Naive thymus-derived CD4-positive, alpha-beta T cell (primary cell): ENCODE measurements at regions of chr1 and their contacts with region 1.

Region 1: GRCh38 chr1:109213785-109214468 is at the start of gene SARS1:
- DNase-seq: peak; percentile 77 to 96 (median 91)
- ATAC-seq: peak; percentile 91
- H3K4me3 ChIP-seq: peak within 1 kb of the TSS; percentile 97
- H3K4me3 Mint-ChIP-seq: peak within 1 kb of the TSS; percentile 94 to 100 (median 98)
- H3K27ac ChIP-seq: peak within 1 kb of the TSS; percentile 85
- H3K27ac Mint-ChIP-seq: peak within 1 kb of the TSS; percentile 85 to 98 (median 97)
- H3K4me1 ChIP-seq: peaks cover 22 to 27% of the 10 kb centered on the region in 2 donors
- H3K4me1 Mint-ChIP-seq: peaks cover 33 to 47% (median 42%) of the 10 kb centered on the region in 7 donors
- H3K27me3 ChIP-seq: no peaks in the 10 kb centered on the region
- H3K27me3 Mint-ChIP-seq: peaks cover 0 to 4% (median 0%) of the 10 kb centered on the region in 5 donors
- total RNA-seq, gene SARS1: 110 to 173 (median 135) TPM

Region 2: GRCh38 chr1:108746372-108747205 is 467.3 kb before region 1 on chr1 and contains the start of gene STXBP3:
- CTCF ChIA-PET with region 1: no interaction called
- POLR2A ChIA-PET with region 1: no interaction called
- intact Hi-C with region 1: loop called in 1 of 2 experiments (anchors 1 kb)
- DNase-seq: peak; percentile 98 to 100 (median 99)
- ATAC-seq: peak; percentile 97
- H3K4me3 ChIP-seq: peak within 1 kb of the TSS; percentile 76
- H3K4me3 Mint-ChIP-seq: peak within 1 kb of the TSS; percentile 90 to 100 (median 97)
- H3K27ac ChIP-seq: peak within 1 kb of the TSS; percentile 98
- H3K27ac Mint-ChIP-seq: peak within 1 kb of the TSS; percentile 93 to 100 (median 98)
- H3K4me1 ChIP-seq: peaks cover 3 to 6% of the 10 kb centered on the region in 2 donors
- H3K4me1 Mint-ChIP-seq: peaks cover 26 to 47% (median 41%) of the 10 kb centered on the region in 7 donors
- H3K27me3 ChIP-seq: no peaks in the 10 kb centered on the region
- H3K27me3 Mint-ChIP-seq: peaks cover 0 to 5% (median 0%) of the 10 kb centered on the region in 5 donors
- total RNA-seq, gene STXBP3: 46.8 to 75.2 (median 54.0) TPM

Region 3: DNA sequence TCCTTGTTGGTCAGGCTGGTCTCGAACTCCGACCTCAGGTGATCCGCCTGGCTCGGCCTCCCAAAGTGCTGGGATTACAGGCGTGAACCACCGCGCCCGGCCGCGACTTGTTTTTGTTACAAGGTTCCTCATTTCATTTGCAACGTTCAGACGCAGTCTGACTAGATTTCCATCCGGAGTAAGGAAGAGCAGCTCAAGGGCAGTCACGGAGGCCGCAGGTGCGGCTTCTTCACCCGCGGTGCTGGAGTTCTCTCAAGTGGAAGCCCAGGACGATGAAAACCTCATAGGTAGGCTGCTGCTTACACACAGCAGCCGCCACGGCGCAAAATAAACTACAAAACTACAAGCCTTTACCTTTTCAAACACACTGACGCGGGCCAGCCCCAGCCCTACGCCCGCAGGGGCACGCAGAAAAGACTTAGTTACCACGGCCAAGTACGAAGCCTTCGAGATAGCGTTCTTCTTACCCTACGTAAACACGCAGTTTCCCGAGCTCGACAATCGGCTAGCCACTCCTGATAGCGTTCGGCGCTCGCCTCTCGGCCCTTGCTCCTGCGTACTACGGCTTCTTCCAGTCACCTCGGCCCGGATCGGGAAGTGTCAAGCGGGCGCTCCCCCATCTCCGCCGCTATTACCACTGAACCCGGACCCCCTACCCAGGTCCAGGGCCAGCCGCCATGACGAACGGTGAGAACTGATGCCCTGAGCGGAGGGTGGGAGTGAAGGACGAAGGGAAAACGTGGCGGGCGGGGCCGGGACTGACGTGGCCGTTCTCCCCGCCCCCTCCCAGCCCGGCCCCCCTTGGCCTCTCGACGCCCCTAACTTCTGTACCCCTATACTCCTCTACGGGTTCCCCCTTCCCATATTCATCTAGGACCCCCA is 123.5 kb before region 1 on chr1 and contains the start of gene TMEM167B:
- CTCF ChIA-PET with region 1: no interaction called
- POLR2A ChIA-PET with region 1: interaction called, 3 read pairs
- intact Hi-C with region 1: loop called in 1 of 2 experiments (anchors 5 kb)
- DNase-seq: peak; percentile 71 to 92 (median 87)
- ATAC-seq: peak; percentile 98
- H3K4me3 ChIP-seq: peak within 1 kb of the TSS; percentile 84
- H3K4me3 Mint-ChIP-seq: peak within 1 kb of the TSS; percentile 88 to 98 (median 96)
- H3K27ac ChIP-seq: peak within 1 kb of the TSS; percentile 97
- H3K27ac Mint-ChIP-seq: peak within 1 kb of the TSS; percentile 90 to 99 (median 98)
- H3K4me1 ChIP-seq: peaks cover 14 to 18% of the 10 kb centered on the region in 2 donors
- H3K4me1 Mint-ChIP-seq: peaks cover 15 to 43% (median 36%) of the 10 kb centered on the region in 7 donors
- H3K27me3 ChIP-seq: no peaks in the 10 kb centered on the region
- H3K27me3 Mint-ChIP-seq: no peaks in the 10 kb centered on the region
- total RNA-seq, gene TMEM167B: 33.2 to 65.6 (median 41.2) TPM

Region 4: GRCh38 chr1:109193653-109194590 is 20.0 kb before region 1 on chr1:
- CTCF ChIA-PET with region 1: interaction called, 5 read pairs
- POLR2A ChIA-PET with region 1: interaction called, 14 read pairs
- intact Hi-C with region 1: no loop called
- DNase-seq: peak in 7 of 9 donors; percentile 25 to 68 (median 42)
- ATAC-seq: peak; percentile 81
- H3K4me3 ChIP-seq: no peak overlapping the region
- H3K4me3 Mint-ChIP-seq: no peak overlapping the region
- H3K27ac ChIP-seq: no peak overlapping the region
- H3K27ac Mint-ChIP-seq: peak overlapping the region in 1 of 9 donors; percentile 76
- H3K4me1 ChIP-seq: peaks cover 0 to 1% of the 10 kb centered on the region in 2 donors
- H3K4me1 Mint-ChIP-seq: peaks cover 2 to 18% (median 5%) of the 10 kb centered on the region in 7 donors
- H3K27me3 ChIP-seq: no peaks in the 10 kb centered on the region
- H3K27me3 Mint-ChIP-seq: no peaks in the 10 kb centered on the region

Region 5: DNA sequence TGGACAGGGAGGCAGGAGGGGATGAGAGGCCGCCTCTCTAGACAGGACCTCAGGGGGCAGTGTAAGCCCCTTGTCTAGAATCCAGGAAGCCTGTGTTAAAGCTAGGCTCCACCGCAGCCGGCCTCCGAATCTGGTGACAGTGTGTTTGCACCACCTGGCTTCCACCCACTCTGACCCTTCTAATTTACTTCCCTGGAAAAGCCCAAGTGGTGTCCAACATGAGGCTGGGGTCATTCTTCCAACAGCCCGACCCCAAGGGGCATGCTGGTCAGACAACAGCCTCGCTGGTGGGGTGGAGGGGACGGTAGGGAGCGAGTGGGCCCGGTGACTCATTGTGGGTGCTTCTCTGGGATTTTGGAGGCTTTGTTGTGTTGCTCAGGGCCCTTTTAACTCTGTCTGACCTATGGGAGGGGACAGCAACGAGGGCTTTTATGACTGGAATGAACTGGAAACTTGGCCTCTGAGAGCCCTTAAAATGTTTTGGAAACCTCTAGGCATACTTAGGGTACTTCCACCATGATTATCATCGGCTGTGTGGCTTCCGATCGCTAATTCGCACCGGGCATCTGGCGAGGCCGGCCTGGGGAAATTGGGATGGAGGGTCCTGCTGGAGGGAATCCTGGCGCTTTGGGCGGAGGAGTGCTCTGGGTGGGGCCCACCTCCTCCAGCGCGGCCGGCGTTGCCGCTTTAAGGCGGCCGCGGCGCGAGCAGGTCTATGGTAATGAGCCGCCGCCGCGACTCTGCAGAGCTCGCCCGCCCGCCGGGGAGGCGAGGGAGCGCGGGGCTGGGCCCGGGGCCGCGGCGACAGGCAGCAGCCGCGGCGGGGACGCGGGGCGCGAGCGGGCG is 35.1 kb after region 1 on chr1 and contains the start of gene CELSR2:
- CTCF ChIA-PET with region 1: no interaction called
- POLR2A ChIA-PET with region 1: no interaction called
- intact Hi-C with region 1: loop called in 1 of 2 experiments (anchors 2 kb)
- DNase-seq: peak; percentile 49 to 73 (median 60)
- ATAC-seq: peak; percentile 91
- H3K4me3 ChIP-seq: peak within 1 kb of the TSS; percentile 58
- H3K4me3 Mint-ChIP-seq: peak within 1 kb of the TSS; percentile 65 to 85 (median 72)
- H3K27ac ChIP-seq: no peak within 1 kb of the TSS
- H3K27ac Mint-ChIP-seq: peak within 1 kb of the TSS in 1 of 9 donors; percentile 43
- H3K4me1 ChIP-seq: peaks cover 11 to 15% of the 10 kb centered on the region in 2 donors
- H3K4me1 Mint-ChIP-seq: peaks cover 3 to 19% (median 13%) of the 10 kb centered on the region in 7 donors
- H3K27me3 ChIP-seq: no peaks in the 10 kb centered on the region
- H3K27me3 Mint-ChIP-seq: peaks cover 0 to 24% (median 7%) of the 10 kb centered on the region in 5 donors
- total RNA-seq, gene CELSR2: 3.0 to 6.4 (median 3.2) TPM

Region 6: DNA sequence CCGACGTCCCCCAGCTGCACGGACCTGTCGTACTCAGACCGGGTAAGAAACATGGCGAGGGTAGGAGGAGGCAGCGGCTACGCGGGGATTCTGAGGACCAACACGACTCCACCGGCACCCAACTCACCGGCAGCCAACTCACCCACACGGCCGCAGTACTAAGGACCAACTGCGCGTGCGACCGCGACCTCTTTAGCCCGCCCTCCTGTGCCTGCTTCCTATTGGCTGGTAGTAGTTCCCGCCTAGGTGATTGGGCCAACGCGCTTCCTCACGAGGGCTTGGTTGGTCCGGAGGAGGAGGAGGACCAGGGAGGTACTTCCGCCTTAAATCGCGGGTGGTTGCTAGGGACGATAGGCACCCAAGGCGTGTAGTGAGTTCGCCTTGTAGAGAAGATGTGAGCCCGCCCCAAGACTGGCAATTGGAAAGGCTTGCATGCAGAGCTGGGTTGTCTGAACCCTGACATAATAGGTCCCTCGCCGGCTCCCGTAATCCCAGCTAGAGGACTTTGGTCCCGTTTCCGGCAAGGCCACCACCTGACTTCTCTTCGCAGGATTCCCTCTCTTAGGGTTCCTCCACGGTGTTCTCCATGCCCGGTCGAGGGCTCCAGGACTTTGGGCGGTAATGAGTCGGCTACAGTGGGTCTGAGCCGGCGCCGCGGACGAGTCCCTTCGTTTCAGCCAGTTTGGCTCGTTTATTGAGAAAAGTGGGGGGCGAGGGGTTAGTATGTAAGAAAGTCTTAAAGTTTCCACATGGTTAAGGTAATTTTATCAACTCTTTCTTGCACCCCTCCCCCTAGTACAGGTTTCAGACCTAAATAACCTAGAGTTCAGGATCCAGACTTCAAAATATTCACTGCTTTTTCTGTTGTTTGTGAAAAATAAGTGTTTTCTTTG is 212.6 kb after region 1 on chr1 and contains the start of gene PSMA5:
- CTCF ChIA-PET with region 1: no interaction called
- POLR2A ChIA-PET with region 1: interaction called, 6 read pairs
- intact Hi-C with region 1: loop called (anchors 1 kb)
- DNase-seq: peak; percentile 73 to 97 (median 95)
- ATAC-seq: peak; percentile 96
- H3K4me3 ChIP-seq: peak within 1 kb of the TSS; percentile 77
- H3K4me3 Mint-ChIP-seq: peak within 1 kb of the TSS; percentile 95 to 99 (median 98)
- H3K27ac ChIP-seq: peak within 1 kb of the TSS; percentile 91
- H3K27ac Mint-ChIP-seq: peak within 1 kb of the TSS; percentile 80 to 99 (median 98)
- H3K4me1 ChIP-seq: peaks cover 27 to 29% of the 10 kb centered on the region in 2 donors
- H3K4me1 Mint-ChIP-seq: peaks cover 29 to 46% (median 34%) of the 10 kb centered on the region in 7 donors
- H3K27me3 ChIP-seq: no peaks in the 10 kb centered on the region
- H3K27me3 Mint-ChIP-seq: no peaks in the 10 kb centered on the region
- total RNA-seq, gene PSMA5: 38.3 to 203 (median 70.7) TPM

Region 7: GRCh38 chr1:110209715-110210603 is 996.0 kb after region 1 on chr1 and contains the start of gene KCNC4:
- CTCF ChIA-PET with region 1: no interaction called
- POLR2A ChIA-PET with region 1: no interaction called
- intact Hi-C with region 1: loop called in 1 of 2 experiments (anchors 5 kb)
- DNase-seq: peak; percentile 80 to 93 (median 91)
- ATAC-seq: peak; percentile 93
- H3K4me3 ChIP-seq: peak within 1 kb of the TSS; percentile 72
- H3K4me3 Mint-ChIP-seq: peak within 1 kb of the TSS; percentile 86 to 94 (median 88)
- H3K27ac ChIP-seq: peak within 1 kb of the TSS; percentile 89
- H3K27ac Mint-ChIP-seq: peak within 1 kb of the TSS; percentile 88 to 98 (median 95)
- H3K4me1 ChIP-seq: peaks cover 7 to 20% of the 10 kb centered on the region in 2 donors
- H3K4me1 Mint-ChIP-seq: peaks cover 31 to 61% (median 42%) of the 10 kb centered on the region in 7 donors
- H3K27me3 ChIP-seq: no peaks in the 10 kb centered on the region
- H3K27me3 Mint-ChIP-seq: peaks cover 0 to 16% (median 0%) of the 10 kb centered on the region in 5 donors
- total RNA-seq, gene KCNC4: 5.8 to 18.2 (median 12.4) TPM